Activated CD4-positive, alpha-beta T cell treated with anti-CD3 and anti-CD28 coated beads, Interleukin-2, amount 10 ng/mL, durations not matched to agents 24 days and 14 days (primary cell): ENCODE measurements at regions of chr3 and their contacts with region 1.

Region 1: DNA sequence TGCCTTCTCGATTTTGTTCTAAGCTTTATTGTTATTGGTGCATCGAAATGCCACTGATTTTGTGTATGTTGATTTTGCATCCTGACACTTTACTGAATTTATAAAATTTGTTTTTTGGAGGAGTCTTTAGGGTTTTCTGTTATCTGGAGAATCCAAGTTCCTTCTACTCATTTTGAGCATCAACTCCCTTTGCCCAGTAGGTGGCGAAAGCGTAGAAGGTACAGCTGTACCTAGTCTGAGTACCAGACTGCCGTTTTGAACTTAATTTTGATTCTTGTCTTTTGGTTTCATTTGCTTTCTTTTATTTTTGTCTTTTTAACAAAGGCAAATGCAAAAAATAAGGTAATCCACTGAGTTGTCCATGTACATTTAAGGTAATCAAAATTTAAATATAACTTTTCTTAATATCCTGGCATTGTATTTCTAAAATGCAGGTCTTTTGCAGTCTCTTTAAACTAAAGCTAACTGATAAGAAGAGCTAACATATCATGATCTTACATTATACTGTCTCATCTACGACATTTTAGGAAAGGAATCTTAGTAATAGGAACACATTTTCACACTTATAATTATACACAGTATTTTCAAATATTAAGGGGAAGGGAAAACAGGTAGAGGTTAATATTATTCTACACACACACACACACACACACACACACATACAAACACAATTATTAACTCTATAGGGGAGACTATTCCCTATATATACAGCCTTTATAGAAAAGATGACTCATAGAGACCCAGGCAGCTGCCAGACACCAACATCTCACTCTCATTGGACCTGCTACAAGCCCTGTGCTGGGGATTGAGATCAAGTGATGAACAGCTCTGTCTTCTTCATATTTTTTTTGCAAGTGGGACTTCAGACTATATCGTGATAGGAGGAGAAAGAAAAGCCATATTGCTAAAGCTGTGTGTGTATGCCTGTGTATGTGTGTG is 71.7 kb downstream of the SYNPR start:
- DNase-seq: peak; percentile 77
- H3K4me3 Mint-ChIP-seq: no peak overlapping the region
- H3K27ac Mint-ChIP-seq: no peak overlapping the region
- H3K4me1 Mint-ChIP-seq: no peaks in the 10 kb centered on the region
- H3K27me3 Mint-ChIP-seq: peaks cover 6% of the 10 kb centered on the region

Region 2: DNA sequence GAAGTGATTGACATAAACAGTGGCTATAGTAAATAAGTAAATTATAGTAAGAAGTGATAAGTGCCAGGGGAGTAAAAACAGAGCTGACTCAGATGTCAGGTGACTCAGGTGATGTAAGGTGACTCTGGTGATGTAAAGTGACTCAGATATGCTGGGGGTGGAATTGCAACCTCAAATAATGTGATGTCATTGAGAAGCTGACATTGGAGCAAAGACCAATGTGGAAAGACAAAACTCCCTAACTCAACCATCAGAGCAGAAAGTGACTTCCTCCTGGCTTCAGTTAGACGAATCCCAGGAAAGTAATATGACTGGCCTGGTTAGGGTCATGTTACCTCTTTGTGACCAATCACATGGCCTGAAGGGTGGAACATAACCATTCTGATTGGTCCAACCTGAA is 158.5 kb after region 1 on chr3:
- intact Hi-C with region 1: no loop called
- DNase-seq: no peak
- H3K4me3 Mint-ChIP-seq: no peak overlapping the region
- H3K27ac Mint-ChIP-seq: no peak overlapping the region
- H3K4me1 Mint-ChIP-seq: no peaks in the 10 kb centered on the region
- H3K27me3 Mint-ChIP-seq: no peaks in the 10 kb centered on the region

Region 3: GRCh38 chr3:63818281-63819150 is 468.7 kb after region 1 on chr3:
- intact Hi-C with region 1: loop called (anchors 1 kb)
- DNase-seq: peak; percentile 87
- H3K4me3 Mint-ChIP-seq: no peak overlapping the region
- H3K27ac Mint-ChIP-seq: no peak overlapping the region
- H3K4me1 Mint-ChIP-seq: peaks cover 4% of the 10 kb centered on the region
- H3K27me3 Mint-ChIP-seq: no peaks in the 10 kb centered on the region